Activated T-helper 1 cell treated with anti-CD3 and anti-CD28 coated beads, Interleukin-12 subunit alpha, Interleukin-12 subunit beta, Interleukin-2, Interleukin-4 antibody, amounts not matched to agents 30 ng/mL and 10 ng/mL and 1 ng/mL, durations not matched to agents 14 hours and 24 hours and 36 hours (primary cell): ENCODE measurements at regions of chr5 and their contacts with region 1.

Region 1: DNA sequence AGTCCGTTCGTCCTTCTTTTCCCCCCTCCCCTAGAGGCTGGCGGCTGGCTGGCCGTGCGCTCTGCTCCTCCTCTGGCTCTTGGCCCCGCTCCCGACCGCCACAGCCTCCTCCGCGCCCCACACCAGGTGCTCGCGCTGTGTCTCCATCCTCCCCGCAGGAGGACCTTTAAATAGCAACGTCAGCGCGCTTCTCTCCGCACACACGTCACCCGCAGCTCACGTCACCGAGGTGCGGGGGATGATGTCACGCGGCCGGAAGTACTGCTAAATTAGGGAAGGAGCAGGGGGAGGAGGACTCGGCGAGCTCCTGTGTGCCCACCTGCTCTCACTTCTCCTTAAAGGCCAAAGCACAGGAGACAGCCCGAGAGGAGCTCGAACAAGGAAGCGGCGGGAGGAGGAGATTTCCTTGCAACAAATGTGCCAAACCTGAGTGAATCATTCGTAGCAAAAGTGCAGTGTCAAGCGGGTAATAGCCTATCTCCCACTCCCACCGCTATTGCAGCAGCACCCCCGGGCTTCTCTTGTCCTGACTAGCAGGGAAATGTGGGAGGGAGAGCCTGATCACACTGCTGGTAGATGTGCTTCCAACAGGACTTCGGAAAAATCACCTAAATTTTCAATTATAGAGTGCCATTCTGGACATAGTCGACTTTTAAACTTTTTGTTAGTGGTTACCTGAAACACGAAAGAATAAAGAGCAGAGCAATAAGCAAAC is 614 bp upstream of the HOMER1 start:
- DNase-seq: peak; percentile 88
- H3K4me3 Mint-ChIP-seq: peak overlapping the region; percentile 99
- H3K27ac Mint-ChIP-seq: peak overlapping the region; percentile 100
- H3K4me1 Mint-ChIP-seq: peaks cover 43% of the 10 kb centered on the region
- H3K27me3 Mint-ChIP-seq: peaks cover 26% of the 10 kb centered on the region

Region 2: DNA sequence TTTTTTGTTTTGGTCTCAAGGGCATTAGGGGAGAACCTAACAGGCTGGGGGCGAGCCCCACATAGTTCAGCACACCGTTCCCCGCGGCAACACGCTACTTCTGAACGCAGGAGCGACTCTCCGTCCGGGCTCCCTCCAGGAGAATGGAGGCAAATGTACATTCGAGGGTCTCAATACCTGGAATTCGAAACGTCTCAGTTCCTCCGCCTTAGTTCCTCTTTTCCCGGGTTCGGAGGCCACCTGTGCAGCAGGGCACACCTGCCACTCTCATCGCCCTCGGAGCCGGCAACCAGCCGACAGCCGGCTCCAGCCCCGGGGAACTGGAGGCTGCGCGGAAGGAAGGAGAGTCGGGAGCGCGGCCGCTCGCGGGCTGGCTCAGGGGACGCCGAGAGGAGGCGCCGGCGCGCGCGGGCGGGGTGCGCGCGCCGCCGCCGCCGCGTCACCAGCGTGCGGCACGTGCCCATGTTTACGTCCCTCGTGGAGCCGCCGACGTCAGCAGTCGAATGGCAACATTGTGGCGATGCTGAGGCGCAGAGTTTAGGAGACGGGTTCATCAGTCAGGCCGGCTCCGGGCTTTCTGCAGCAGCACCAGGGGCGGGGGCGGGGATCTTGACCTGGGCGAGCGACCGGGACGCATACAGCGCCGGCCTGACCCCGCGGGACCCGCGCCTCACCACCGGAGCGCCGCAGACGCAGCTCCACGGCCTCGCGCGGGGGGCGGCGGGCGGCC is 278.7 kb before region 1 on chr5 and contains the start of gene JMY:
- intact Hi-C with region 1: loop called (anchors 1 kb)
- DNase-seq: peak; percentile 77
- H3K4me3 Mint-ChIP-seq: peak within 1 kb of the TSS; percentile 94
- H3K27ac Mint-ChIP-seq: peak within 1 kb of the TSS; percentile 95
- H3K4me1 Mint-ChIP-seq: peaks cover 33% of the 10 kb centered on the region
- H3K27me3 Mint-ChIP-seq: peaks cover 2% of the 10 kb centered on the region
- total RNA-seq, gene JMY: 5.5 and 5.9 TPM in 2 replicates